ENCODE measurements at regions of chr6 and their contacts with region 1.

Region 1: DNA sequence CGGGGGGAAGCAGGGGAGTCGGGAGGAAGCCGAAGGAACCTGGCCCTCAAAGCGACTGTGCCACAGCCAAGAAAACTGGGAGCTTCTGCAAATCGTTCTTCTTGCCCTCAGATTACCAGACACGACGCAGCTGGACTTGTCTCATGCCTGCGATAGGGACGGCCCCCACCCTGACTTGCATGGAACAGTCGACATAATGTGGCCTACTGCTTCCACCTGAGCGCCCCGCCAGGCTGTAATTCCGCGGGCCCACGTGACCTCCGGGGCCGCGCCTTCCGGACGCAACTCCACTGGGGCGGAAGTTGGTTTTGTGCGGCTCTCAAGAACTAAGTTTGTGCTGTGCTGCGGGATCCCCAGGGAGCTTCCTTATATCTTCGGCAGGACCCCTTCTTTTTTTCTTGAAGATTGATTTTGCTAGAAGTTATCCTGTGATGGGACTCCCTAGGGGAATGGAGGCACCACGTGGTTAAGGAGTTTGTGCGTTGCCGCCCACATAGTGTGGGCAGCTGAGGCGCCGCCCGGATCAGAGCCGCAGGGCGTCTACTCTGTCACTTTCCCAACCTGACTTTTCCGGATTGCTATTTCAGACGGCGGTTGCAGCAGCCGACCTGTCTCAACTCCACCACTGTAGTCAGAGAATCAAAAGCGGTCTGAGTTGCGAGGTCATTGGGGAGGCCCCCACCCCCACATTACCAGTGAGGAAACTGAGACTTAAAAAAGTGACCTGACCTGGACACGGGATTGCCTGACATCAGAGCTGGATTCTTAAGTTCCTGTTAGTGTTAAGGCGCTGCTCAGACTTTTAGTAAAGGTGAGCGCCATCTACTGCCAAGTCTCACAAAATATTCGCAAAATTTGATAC is 540 bp upstream of the CD164 start:
- DNase-seq: peak; percentile 95 to 97 (median 96)
- H3K4me3 ChIP-seq: peak overlapping the region; percentile 77 to 96
- H3K4me3 Mint-ChIP-seq: peak overlapping the region; percentile 89 to 98 (median 98)
- H3K27ac ChIP-seq: peak overlapping the region; percentile 97
- H3K27ac Mint-ChIP-seq: peak overlapping the region; percentile 99 to 100 (median 99)
- H3K4me1 ChIP-seq: peaks cover 37% of the 10 kb centered on the region
- H3K4me1 Mint-ChIP-seq: peaks cover 27 to 54% (median 39%) of the 10 kb centered on the region in 4 donors
- H3K27me3 ChIP-seq: no peaks in the 10 kb centered on the region
- H3K27me3 Mint-ChIP-seq: no peaks in the 10 kb centered on the region

Region 2: GRCh38 chr6:108541838-108542759 is 840.7 kb before region 1 on chr6:
- CTCF ChIA-PET with region 1: interaction called, 11 read pairs
- POLR2A ChIA-PET with region 1: no interaction called
- intact Hi-C with region 1: loop called (anchors 1 kb)
- DNase-seq: peak; percentile 71 to 74 (median 73)
- H3K4me3 ChIP-seq: no peak overlapping the region
- H3K4me3 Mint-ChIP-seq: peak overlapping the region in 4 of 8 donors; percentile 16 to 71 (median 56)
- H3K27ac ChIP-seq: no peak overlapping the region
- H3K27ac Mint-ChIP-seq: no peak overlapping the region
- H3K4me1 ChIP-seq: peaks cover 8% of the 10 kb centered on the region
- H3K4me1 Mint-ChIP-seq: peaks cover 6 to 17% (median 8%) of the 10 kb centered on the region in 4 donors
- H3K27me3 ChIP-seq: no peaks in the 10 kb centered on the region
- H3K27me3 Mint-ChIP-seq: peaks cover 4 to 6% of the 10 kb centered on the region in 2 donors

Region 3: DNA sequence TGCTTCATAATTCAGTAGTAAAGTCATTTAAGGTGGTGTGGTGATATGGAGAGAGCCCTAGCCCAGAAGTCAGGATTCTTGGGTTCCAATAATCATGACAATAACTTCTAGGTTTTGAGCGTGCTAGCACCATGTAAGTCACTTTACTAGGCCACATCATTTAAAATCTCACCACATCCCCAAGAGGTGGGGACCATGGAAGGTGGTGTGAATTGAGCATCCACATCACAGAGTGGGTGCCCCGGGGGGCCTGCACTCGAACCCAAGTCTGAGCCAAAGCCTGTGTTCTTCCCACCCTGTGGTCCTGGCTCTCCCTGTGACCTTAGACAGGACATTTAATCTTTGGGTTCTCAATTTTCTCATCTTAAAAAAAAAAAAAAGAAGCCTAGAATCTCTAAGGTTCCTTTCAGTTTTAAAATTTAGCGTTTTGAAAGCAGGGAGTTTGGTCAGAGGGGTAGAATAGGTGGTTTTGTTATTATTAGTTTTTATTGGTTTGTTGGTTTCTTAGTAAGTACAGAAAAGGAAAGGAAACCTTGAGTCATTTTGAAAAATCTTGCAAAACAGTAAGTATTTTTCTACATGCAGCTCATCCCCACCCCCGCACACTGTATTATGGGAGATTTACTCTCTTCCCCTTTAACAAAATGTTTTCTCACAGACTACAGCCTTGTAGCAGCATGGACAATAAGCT is 508.2 kb before region 1 on chr6:
- CTCF ChIA-PET with region 1: interaction called, 3 read pairs
- POLR2A ChIA-PET with region 1: no interaction called
- intact Hi-C with region 1: loop called (anchors 10 kb)
- DNase-seq: peak; percentile 22 to 47 (median 29)
- H3K4me3 ChIP-seq: peak overlapping the region in 1 of 2 donors; percentile 16
- H3K4me3 Mint-ChIP-seq: peak overlapping the region; percentile 70 to 90 (median 77)
- H3K27ac ChIP-seq: peak overlapping the region; percentile 52
- H3K27ac Mint-ChIP-seq: peak overlapping the region; percentile 77 to 96 (median 90)
- H3K4me1 ChIP-seq: peaks cover 46% of the 10 kb centered on the region
- H3K4me1 Mint-ChIP-seq: peaks cover 34 to 54% (median 45%) of the 10 kb centered on the region in 4 donors
- H3K27me3 ChIP-seq: no peaks in the 10 kb centered on the region
- H3K27me3 Mint-ChIP-seq: no peaks in the 10 kb centered on the region

Region 4: GRCh38 chr6:109187399-109188114 is 195.2 kb before region 1 on chr6:
- CTCF ChIA-PET with region 1: interaction called, 161 read pairs
- POLR2A ChIA-PET with region 1: interaction called, 37 read pairs
- intact Hi-C with region 1: loop called (anchors 1 kb)
- DNase-seq: peak; percentile 52 to 62 (median 59)
- H3K4me3 ChIP-seq: no peak overlapping the region
- H3K4me3 Mint-ChIP-seq: no peak overlapping the region
- H3K27ac ChIP-seq: no peak overlapping the region
- H3K27ac Mint-ChIP-seq: no peak overlapping the region
- H3K4me1 ChIP-seq: no peaks in the 10 kb centered on the region
- H3K4me1 Mint-ChIP-seq: peaks cover 0 to 5% (median 0%) of the 10 kb centered on the region in 4 donors
- H3K27me3 ChIP-seq: peaks cover 6% of the 10 kb centered on the region
- H3K27me3 Mint-ChIP-seq: peaks cover 3 to 10% of the 10 kb centered on the region in 2 donors

Region 5: DNA sequence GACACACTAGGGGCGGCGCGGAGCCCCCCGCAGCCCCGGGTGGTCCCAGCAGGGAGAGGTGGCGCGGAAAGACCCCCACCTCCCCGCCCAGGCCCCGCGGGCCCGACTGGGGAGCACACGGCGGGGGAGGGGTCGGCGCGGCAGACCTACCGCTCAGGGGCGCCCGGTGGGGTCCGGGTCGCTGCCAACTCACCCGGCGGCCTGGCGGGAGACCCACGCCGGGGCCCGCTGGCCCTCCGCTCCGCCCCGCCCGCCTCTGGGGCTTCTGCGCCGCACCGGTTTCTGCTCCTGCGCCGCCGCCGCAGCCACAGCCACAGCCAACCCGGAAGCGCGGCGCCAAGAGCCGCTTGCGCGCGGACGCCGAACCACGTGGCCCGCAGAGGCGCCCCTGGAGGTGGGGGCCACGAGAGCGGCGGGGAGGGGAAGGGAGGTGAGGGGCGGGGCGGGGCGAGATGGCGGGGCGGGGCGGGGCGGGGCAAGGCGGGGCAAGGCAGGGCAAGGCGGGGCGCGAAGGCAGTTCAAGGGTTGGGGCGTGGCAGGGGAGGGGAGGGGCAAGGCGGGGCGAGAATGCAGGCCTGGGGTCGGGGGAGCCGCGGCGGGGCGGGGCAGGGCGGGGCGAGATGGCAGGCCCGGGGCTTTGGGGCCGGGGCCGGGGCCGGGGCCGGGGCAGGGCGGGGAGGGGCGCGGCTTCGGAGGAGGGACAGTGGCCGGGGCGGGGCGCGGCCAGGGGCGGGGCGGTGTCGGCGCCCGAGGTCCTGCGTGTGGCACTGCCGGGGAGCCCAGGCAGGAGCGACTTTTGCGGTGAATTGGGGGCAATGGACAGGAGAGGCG is 100.3 kb after region 1 on chr6 and contains the start of gene ZBTB24:
- CTCF ChIA-PET with region 1: interaction called, 9 read pairs
- POLR2A ChIA-PET with region 1: interaction called, 54 read pairs
- intact Hi-C with region 1: loop called (anchors 1 kb)
- DNase-seq: peak; percentile 90 to 93 (median 91)
- H3K4me3 ChIP-seq: peak within 1 kb of the TSS; percentile 76 to 77
- H3K4me3 Mint-ChIP-seq: peak within 1 kb of the TSS; percentile 84 to 97 (median 96)
- H3K27ac ChIP-seq: peak within 1 kb of the TSS; percentile 69
- H3K27ac Mint-ChIP-seq: peak within 1 kb of the TSS; percentile 89 to 97 (median 95)
- H3K4me1 ChIP-seq: peaks cover 46% of the 10 kb centered on the region
- H3K4me1 Mint-ChIP-seq: peaks cover 41 to 54% (median 47%) of the 10 kb centered on the region in 4 donors
- H3K27me3 ChIP-seq: no peaks in the 10 kb centered on the region
- H3K27me3 Mint-ChIP-seq: no peaks in the 10 kb centered on the region
- total RNA-seq, gene ZBTB24: 27.2 to 28.4 TPM

Region 6: DNA sequence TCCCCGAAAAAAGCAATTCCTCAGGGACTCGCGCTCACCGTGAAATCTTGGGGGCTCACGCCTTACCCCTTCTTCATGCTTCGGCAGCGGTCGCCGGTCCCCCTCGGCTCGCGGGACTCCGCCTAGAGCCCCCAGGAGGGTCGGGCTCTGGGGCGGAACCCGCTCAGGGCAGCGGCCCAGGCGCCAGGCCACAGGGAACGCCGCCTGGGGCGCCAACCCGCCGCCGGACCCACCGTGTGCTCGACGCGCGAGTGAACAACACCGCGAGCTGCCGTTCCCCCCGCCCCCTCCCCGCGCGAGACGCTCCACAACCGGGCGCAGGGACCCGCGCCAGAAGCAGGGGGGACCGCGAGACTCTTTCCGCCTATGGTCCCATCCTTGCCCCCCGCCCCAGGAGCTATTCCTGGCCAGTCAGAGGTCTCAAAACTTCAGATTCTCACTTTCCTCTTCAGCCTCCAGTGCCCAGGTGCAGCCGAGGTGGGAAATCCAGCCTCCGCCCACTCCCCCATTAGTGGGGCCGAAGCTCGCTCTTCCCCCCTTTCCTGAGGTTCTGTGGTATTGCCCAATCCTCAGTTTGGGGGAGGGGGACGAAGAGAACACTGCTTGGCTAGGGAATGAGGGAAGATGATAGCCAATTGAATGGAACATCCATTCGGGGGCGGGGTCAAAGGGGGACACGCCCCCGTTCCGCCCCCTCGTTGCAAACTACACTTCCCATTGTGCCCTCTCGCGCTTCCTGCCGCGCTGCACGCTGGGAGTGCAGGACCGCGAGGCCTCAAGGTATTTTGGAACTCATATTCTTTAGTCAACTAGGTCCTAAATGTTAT is 796.8 kb after region 1 on chr6 and contains the start of gene WASF1:
- CTCF ChIA-PET with region 1: no interaction called
- POLR2A ChIA-PET with region 1: no interaction called
- intact Hi-C with region 1: loop called (anchors 1 kb)
- DNase-seq: peak; percentile 90 to 93 (median 92)
- H3K4me3 ChIP-seq: peak within 1 kb of the TSS; percentile 77 to 92
- H3K4me3 Mint-ChIP-seq: peak within 1 kb of the TSS; percentile 82 to 92 (median 86)
- H3K27ac ChIP-seq: peak within 1 kb of the TSS; percentile 88
- H3K27ac Mint-ChIP-seq: peak within 1 kb of the TSS; percentile 24 to 90 (median 64)
- H3K4me1 ChIP-seq: peaks cover 46% of the 10 kb centered on the region
- H3K4me1 Mint-ChIP-seq: peaks cover 5 to 7% (median 6%) of the 10 kb centered on the region in 4 donors
- H3K27me3 ChIP-seq: no peaks in the 10 kb centered on the region
- H3K27me3 Mint-ChIP-seq: peaks cover 4 to 5% of the 10 kb centered on the region in 2 donors
- total RNA-seq, gene WASF1: 0.39 to 0.70 TPM

Measured in CD4-positive, alpha-beta memory T cell (primary cell).